ENCODE measurements at regions of chr7 and their contacts with region 1.

Region 1: GRCh38 chr7:139490133-139490532 is 6.7 kb upstream of the KLRG2 start:
- DNase-seq: no peak
- ATAC-seq: no peak
- H3K4me3 Mint-ChIP-seq: no peak overlapping the region
- H3K27ac Mint-ChIP-seq: no peak overlapping the region
- H3K4me1 Mint-ChIP-seq: peaks cover 9% of the 10 kb centered on the region
- H3K27me3 Mint-ChIP-seq: peaks cover 2% of the 10 kb centered on the region
- CTCF ChIP-seq: no peak

Region 2: DNA sequence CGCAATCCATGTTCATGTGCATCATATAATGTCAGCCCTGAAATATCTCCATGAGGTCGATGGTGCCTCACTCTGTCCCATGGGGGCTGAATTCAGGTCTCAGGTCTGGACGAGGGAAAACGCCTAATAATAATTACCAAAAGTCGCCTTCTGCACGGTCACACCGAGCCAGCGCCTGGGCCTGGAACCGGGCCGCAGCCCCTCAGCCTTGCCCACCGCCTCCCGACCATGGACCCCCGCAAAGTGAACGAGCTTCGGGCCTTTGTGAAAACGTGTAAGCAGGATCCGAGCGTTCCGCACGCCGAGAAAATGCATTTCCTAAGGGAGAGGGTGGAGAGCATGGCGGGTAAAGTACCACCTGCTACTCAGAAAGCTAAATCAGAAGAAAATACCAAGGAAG is 12.1 kb after region 1 on chr7:
- CTCF ChIA-PET with region 1: interaction called, 22 read pairs
- POLR2A ChIA-PET with region 1: no interaction called
- intact Hi-C with region 1: no loop called
- DNase-seq: no peak
- ATAC-seq: no peak
- H3K4me3 Mint-ChIP-seq: no peak overlapping the region
- H3K27ac Mint-ChIP-seq: no peak overlapping the region
- H3K4me1 Mint-ChIP-seq: peaks cover 2% of the 10 kb centered on the region
- H3K27me3 Mint-ChIP-seq: peaks cover 2% of the 10 kb centered on the region
- CTCF ChIP-seq: no peak